B cell (primary cell): ENCODE measurements at regions of chr9 and their contacts with region 1.

Region 1: DNA sequence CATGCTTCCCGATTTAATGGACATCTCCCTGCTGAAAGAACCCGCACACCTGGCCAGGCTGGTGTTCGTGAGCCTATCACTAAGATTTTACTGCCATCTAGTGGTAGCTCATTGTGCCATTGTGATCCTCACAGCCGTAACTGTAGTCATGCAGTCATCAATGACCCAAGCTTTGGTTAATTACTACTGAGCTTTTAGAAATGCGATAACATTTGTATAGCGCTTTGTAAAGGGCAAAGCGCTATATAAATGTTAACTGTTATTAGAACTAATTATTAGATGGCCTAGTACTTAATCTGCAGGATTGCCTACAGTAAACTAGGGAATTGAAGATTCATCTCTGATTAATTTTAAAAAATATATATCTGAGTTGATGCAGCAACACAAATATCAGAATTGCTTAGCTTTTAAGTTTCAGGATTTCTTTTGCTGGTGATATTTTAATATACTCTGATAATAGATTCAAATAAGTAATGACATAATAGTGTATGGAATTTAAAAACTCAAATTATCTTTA is 90.2 kb downstream of the HACD4 start:
- DNase-seq: peak; percentile 78
- ATAC-seq: peak; percentile 77
- H3K4me3 ChIP-seq: no peak overlapping the region
- H3K4me3 Mint-ChIP-seq: no peak overlapping the region
- H3K27ac ChIP-seq: no peak overlapping the region
- H3K27ac Mint-ChIP-seq: no peak overlapping the region
- H3K4me1 ChIP-seq: no peaks in the 10 kb centered on the region
- H3K4me1 Mint-ChIP-seq: peaks cover 3% of the 10 kb centered on the region
- H3K27me3 ChIP-seq: no peaks in the 10 kb centered on the region
- H3K27me3 Mint-ChIP-seq: no peaks in the 10 kb centered on the region
- CTCF ChIP-seq: peak; percentile 88

Region 2: GRCh38 chr9:19471737-19472648 is 1469.2 kb before region 1 on chr9:
- CTCF ChIA-PET with region 1: interaction called, 7 read pairs
- POLR2A ChIA-PET with region 1: no interaction called
- intact Hi-C with region 1: loop called (anchors 2 kb)
- DNase-seq: peak; percentile 61
- ATAC-seq: peak; percentile 68
- H3K4me3 ChIP-seq: peak overlapping the region in 3 of 5 experiments; percentile 11 to 29 (median 20)
- H3K4me3 Mint-ChIP-seq: peak overlapping the region; percentile 71
- H3K27ac ChIP-seq: no peak overlapping the region
- H3K27ac Mint-ChIP-seq: no peak overlapping the region
- H3K4me1 ChIP-seq: peaks cover 7 to 8% of the 10 kb centered on the region in 2 donors
- H3K4me1 Mint-ChIP-seq: peaks cover 3% of the 10 kb centered on the region
- H3K27me3 ChIP-seq: peaks cover 0 to 2% (median 0%) of the 10 kb centered on the region in 4 experiments
- H3K27me3 Mint-ChIP-seq: no peaks in the 10 kb centered on the region
- CTCF ChIP-seq: peak; percentile 75

Region 3: GRCh38 chr9:19925817-19926503 is 1015.3 kb before region 1 on chr9:
- CTCF ChIA-PET with region 1: interaction called, 152 read pairs
- POLR2A ChIA-PET with region 1: no interaction called
- intact Hi-C with region 1: loop called (anchors 1 kb)
- DNase-seq: peak; percentile 81
- ATAC-seq: peak; percentile 97
- H3K4me3 ChIP-seq: peak overlapping the region in 3 of 5 experiments; percentile 2 to 21 (median 4)
- H3K4me3 Mint-ChIP-seq: peak overlapping the region; percentile 20
- H3K27ac ChIP-seq: no peak overlapping the region
- H3K27ac Mint-ChIP-seq: no peak overlapping the region
- H3K4me1 ChIP-seq: peaks cover 8 to 10% of the 10 kb centered on the region in 2 donors
- H3K4me1 Mint-ChIP-seq: peaks cover 9% of the 10 kb centered on the region
- H3K27me3 ChIP-seq: peaks cover 0 to 9% (median 7%) of the 10 kb centered on the region in 4 experiments
- H3K27me3 Mint-ChIP-seq: peaks cover 20% of the 10 kb centered on the region
- CTCF ChIP-seq: peak; percentile 96

Region 4: GRCh38 chr9:20356403-20357035 is 584.7 kb before region 1 on chr9:
- CTCF ChIA-PET with region 1: interaction called, 7 read pairs
- POLR2A ChIA-PET with region 1: no interaction called
- intact Hi-C with region 1: loop called (anchors 1 kb)
- DNase-seq: peak; percentile 31
- ATAC-seq: no peak
- H3K4me3 ChIP-seq: no peak overlapping the region
- H3K4me3 Mint-ChIP-seq: no peak overlapping the region
- H3K27ac ChIP-seq: no peak overlapping the region
- H3K27ac Mint-ChIP-seq: no peak overlapping the region
- H3K4me1 ChIP-seq: no peaks in the 10 kb centered on the region
- H3K4me1 Mint-ChIP-seq: no peaks in the 10 kb centered on the region
- H3K27me3 ChIP-seq: no peaks in the 10 kb centered on the region
- H3K27me3 Mint-ChIP-seq: no peaks in the 10 kb centered on the region
- CTCF ChIP-seq: peak; percentile 19

Region 5: DNA sequence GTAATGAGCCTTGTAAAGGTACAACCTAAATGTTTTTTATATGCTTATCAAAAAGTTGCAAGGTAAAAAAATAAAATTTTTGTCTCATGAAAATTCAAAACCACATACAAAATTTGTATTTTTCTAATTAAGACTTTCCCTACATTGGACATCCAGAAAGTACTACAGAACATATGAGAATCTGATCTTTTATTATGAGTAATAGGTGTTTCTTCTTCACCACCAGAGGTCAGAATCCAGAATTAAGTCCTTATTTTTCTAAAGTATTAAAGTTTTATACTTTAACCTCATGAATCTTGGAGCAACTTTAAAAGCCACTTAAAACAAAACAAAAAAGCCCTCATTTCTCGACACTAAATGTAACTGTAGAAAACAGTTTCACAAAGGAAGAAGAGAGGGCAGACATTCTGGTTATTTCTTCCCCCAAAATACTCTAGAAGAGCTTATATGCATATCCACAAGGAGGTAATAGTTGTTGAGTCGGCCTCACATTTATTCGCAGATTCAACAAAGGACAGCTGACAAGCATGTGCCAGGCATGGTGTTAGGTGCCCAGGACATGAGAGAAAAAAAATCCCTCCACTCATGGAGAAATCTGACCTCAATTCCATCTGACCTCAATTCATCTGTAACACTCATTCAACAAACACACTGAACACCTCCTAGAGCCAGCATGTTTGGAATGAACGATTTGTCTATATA is 388.2 kb before region 1 on chr9:
- CTCF ChIA-PET with region 1: interaction called, 11 read pairs
- POLR2A ChIA-PET with region 1: no interaction called
- intact Hi-C with region 1: loop called (anchors 1 kb)
- DNase-seq: peak; percentile 1
- ATAC-seq: no peak
- H3K4me3 ChIP-seq: no peak overlapping the region
- H3K4me3 Mint-ChIP-seq: no peak overlapping the region
- H3K27ac ChIP-seq: no peak overlapping the region
- H3K27ac Mint-ChIP-seq: no peak overlapping the region
- H3K4me1 ChIP-seq: peaks cover 0 to 7% of the 10 kb centered on the region in 2 donors
- H3K4me1 Mint-ChIP-seq: peaks cover 10% of the 10 kb centered on the region
- H3K27me3 ChIP-seq: no peaks in the 10 kb centered on the region
- H3K27me3 Mint-ChIP-seq: no peaks in the 10 kb centered on the region
- CTCF ChIP-seq: no peak

Region 6: GRCh38 chr9:20832775-20833174 is 108.5 kb before region 1 on chr9:
- CTCF ChIA-PET with region 1: no interaction called
- POLR2A ChIA-PET with region 1: no interaction called
- intact Hi-C with region 1: no loop called
- DNase-seq: no peak
- ATAC-seq: no peak
- H3K4me3 ChIP-seq: no peak overlapping the region
- H3K4me3 Mint-ChIP-seq: no peak overlapping the region
- H3K27ac ChIP-seq: no peak overlapping the region
- H3K27ac Mint-ChIP-seq: no peak overlapping the region
- H3K4me1 ChIP-seq: no peaks in the 10 kb centered on the region
- H3K4me1 Mint-ChIP-seq: no peaks in the 10 kb centered on the region
- H3K27me3 ChIP-seq: no peaks in the 10 kb centered on the region
- H3K27me3 Mint-ChIP-seq: no peaks in the 10 kb centered on the region
- CTCF ChIP-seq: no peak

Region 7: DNA sequence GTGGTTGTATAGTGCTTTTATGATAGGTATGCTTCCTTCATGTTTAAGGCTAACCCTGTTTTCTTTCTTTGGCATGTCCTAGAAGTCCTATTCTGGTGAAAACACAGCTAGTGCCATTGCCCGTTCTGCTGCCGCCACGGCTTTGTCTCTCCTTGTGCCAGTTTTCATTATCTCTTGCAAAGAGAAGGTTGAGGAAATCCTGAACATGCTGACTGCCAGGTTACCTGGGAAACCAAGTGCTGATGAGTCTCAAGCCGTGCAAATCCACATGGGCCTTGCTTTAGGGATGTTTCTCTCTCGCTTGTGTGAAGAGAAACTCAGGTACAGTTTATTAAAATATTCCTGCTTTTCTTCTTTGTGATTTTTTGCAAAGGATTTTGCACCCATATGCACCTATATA is 12.0 kb before region 1 on chr9:
- CTCF ChIA-PET with region 1: interaction called, 10 read pairs
- POLR2A ChIA-PET with region 1: no interaction called
- intact Hi-C with region 1: no loop called
- DNase-seq: no peak
- ATAC-seq: no peak
- H3K4me3 ChIP-seq: no peak overlapping the region
- H3K4me3 Mint-ChIP-seq: no peak overlapping the region
- H3K27ac ChIP-seq: no peak overlapping the region
- H3K27ac Mint-ChIP-seq: no peak overlapping the region
- H3K4me1 ChIP-seq: no peaks in the 10 kb centered on the region
- H3K4me1 Mint-ChIP-seq: no peaks in the 10 kb centered on the region
- H3K27me3 ChIP-seq: no peaks in the 10 kb centered on the region
- H3K27me3 Mint-ChIP-seq: no peaks in the 10 kb centered on the region
- CTCF ChIP-seq: no peak